ENCODE measurements at regions of chr3 and their contacts with region 1.

Region 1: DNA sequence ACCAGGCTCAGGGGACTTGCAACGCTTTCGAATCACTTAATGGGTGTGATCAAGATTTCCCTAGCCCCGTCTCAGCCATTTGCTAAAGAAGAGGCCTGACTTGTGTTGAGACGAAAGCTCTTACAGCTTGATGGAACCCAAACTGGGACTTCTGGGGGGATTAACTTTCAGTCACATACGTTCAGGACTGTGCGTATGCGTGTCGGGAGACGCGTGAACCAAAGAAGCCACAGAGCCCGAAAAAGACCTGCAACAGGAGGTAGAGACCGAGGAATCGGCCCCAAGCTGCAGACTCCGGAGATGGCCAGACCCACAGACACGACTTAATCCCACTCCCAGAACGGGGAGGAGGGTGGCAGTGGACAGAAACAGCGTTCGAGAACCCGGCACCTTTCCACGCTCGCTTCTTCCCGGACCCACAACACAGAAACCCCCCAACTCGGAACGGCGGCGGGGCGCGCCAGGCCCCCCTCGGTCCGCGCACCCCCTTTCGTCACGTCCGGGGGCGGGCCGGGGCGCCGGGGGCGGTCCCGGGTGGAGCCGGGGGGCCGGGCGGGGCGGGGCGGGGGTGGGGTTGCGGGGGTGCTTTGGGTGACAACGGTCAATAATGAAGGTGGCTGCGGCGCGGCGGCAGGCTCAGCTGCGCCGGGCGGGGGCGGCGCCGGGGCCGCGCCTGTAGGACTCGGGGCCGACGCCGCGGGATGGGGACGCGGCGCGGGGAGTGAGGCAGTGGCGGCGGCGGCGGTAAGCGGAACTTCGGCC is at the start of gene ATP11B:
- DNase-seq: peak; percentile 60 to 90 (median 75)
- ATAC-seq: peak; percentile 59
- H3K4me3 ChIP-seq: peak within 1 kb of the TSS; percentile 84
- H3K4me3 Mint-ChIP-seq: peak within 1 kb of the TSS; percentile 100
- H3K27ac ChIP-seq: peak within 1 kb of the TSS; percentile 95 to 98
- H3K27ac Mint-ChIP-seq: peak within 1 kb of the TSS; percentile 100
- H3K4me1 ChIP-seq: peaks cover 17% of the 10 kb centered on the region
- H3K4me1 Mint-ChIP-seq: peaks cover 43% of the 10 kb centered on the region
- H3K27me3 ChIP-seq: no peaks in the 10 kb centered on the region
- H3K27me3 Mint-ChIP-seq: no peaks in the 10 kb centered on the region
- CTCF ChIP-seq: no peak
- total RNA-seq, gene ATP11B: 139 to 143 TPM

Region 2: DNA sequence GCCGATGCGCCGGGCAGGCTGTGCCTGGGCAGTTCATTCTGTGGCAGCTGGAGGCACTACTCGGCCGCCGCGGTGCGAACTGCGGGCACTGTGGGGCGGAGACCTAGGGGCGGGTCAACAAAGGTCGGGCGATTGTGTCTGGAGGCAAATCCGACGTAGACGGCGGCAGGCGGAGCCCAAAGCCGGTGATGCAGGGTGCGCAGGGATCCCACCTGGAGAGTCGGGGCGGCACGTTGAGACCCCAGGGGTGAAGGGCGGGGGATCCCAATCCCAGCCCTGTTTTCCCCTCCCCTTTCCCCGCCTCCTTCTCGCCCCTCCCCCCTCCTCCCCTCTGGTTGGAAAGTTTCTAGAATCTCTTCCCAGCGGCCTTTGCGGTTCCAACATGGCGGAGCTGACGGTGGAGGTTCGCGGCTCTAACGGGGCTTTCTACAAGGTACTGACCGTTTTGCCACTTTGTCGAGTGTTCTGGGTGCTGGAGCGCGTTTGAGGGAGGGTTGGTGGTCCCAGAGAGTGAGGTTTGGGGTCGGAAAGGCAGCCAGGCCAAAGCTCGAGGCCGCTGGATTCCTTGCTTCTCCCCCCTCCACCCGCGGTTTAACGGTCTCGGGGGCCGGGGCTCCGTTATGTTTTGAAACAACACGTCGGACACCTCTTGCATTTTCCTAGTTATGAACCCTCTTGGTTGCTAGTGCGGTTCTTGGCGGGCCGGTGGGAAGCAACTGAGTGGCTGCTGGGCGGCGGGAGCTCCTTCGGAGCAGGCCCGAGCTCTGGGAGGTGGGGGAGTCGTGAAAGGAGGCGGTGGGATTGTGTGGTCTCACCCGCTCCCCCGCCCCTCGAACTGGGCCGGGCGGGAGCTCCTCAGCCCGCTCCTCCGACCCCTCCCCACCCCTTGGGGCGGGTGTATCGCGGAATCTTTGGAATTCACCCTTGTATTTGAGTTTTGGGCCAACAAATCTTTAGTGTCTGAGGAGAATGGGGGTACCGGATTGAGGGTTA is 1880.5 kb before region 1 on chr3 and contains the start of gene FXR1:
- CTCF ChIA-PET with region 1: no interaction called
- POLR2A ChIA-PET with region 1: no interaction called
- intact Hi-C with region 1: loop called in 1 of 2 experiments (anchors 10 kb)
- DNase-seq: peak; percentile 79 to 94 (median 85)
- ATAC-seq: peak; percentile 90
- H3K4me3 ChIP-seq: peak within 1 kb of the TSS; percentile 98
- H3K4me3 Mint-ChIP-seq: peak within 1 kb of the TSS; percentile 97
- H3K27ac ChIP-seq: peak within 1 kb of the TSS; percentile 89 to 94
- H3K27ac Mint-ChIP-seq: peak within 1 kb of the TSS; percentile 94
- H3K4me1 ChIP-seq: peaks cover 29% of the 10 kb centered on the region
- H3K4me1 Mint-ChIP-seq: peaks cover 65% of the 10 kb centered on the region
- H3K27me3 ChIP-seq: no peaks in the 10 kb centered on the region
- H3K27me3 Mint-ChIP-seq: no peaks in the 10 kb centered on the region
- CTCF ChIP-seq: peak; percentile 68
- total RNA-seq, gene FXR1: 172 to 174 TPM

Region 3: GRCh38 chr3:182808041-182808770 is 15.1 kb after region 1 on chr3:
- CTCF ChIA-PET with region 1: interaction called, 3 read pairs
- POLR2A ChIA-PET with region 1: interaction called, 8 read pairs
- intact Hi-C with region 1: loop called in 1 of 2 experiments (anchors 2 kb)
- DNase-seq: no peak
- ATAC-seq: no peak
- H3K4me3 ChIP-seq: no peak overlapping the region
- H3K4me3 Mint-ChIP-seq: peak overlapping the region; percentile 1
- H3K27ac ChIP-seq: no peak overlapping the region
- H3K27ac Mint-ChIP-seq: peak overlapping the region; percentile 24
- H3K4me1 ChIP-seq: no peaks in the 10 kb centered on the region
- H3K4me1 Mint-ChIP-seq: peaks cover 88% of the 10 kb centered on the region
- H3K27me3 ChIP-seq: no peaks in the 10 kb centered on the region
- H3K27me3 Mint-ChIP-seq: no peaks in the 10 kb centered on the region
- CTCF ChIP-seq: no peak

Region 4: DNA sequence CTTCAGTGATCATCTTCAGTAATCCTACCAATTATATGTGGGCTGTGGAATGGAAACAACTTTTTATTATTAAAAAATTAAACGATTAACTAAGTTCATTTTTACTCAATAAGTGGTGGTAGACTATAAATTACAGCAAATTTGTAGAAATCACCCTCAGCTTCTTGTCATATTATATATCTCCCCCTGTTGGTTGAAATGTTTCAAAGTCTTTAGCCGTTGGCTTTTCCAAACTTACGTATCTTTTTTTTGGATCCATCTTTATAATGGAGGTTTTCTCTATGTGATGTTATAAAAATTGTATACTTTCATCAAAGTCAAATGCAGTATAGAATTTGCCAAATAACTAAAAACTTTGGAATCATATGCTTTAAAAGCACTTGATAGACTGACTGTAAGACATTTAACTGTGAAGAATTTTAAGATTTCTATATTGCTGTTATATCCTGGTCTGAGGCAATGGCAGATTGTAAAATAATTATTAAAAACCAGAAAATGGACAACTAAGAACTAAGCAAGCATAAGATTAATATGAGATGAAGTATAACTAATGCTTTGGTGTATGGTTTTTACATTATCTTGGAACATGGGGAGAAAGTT is 44.9 kb after region 1 on chr3:
- CTCF ChIA-PET with region 1: interaction called, 3 read pairs
- POLR2A ChIA-PET with region 1: interaction called, 7 read pairs
- intact Hi-C with region 1: loop called (anchors 5 kb)
- DNase-seq: peak in 3 of 14 experiments; percentile 42 to 50 (median 46)
- ATAC-seq: no peak
- H3K4me3 ChIP-seq: no peak overlapping the region
- H3K4me3 Mint-ChIP-seq: no peak overlapping the region
- H3K27ac ChIP-seq: no peak overlapping the region
- H3K27ac Mint-ChIP-seq: no peak overlapping the region
- H3K4me1 ChIP-seq: no peaks in the 10 kb centered on the region
- H3K4me1 Mint-ChIP-seq: peaks cover 22% of the 10 kb centered on the region
- H3K27me3 ChIP-seq: no peaks in the 10 kb centered on the region
- H3K27me3 Mint-ChIP-seq: no peaks in the 10 kb centered on the region
- CTCF ChIP-seq: peak; percentile 66

Region 5: DNA sequence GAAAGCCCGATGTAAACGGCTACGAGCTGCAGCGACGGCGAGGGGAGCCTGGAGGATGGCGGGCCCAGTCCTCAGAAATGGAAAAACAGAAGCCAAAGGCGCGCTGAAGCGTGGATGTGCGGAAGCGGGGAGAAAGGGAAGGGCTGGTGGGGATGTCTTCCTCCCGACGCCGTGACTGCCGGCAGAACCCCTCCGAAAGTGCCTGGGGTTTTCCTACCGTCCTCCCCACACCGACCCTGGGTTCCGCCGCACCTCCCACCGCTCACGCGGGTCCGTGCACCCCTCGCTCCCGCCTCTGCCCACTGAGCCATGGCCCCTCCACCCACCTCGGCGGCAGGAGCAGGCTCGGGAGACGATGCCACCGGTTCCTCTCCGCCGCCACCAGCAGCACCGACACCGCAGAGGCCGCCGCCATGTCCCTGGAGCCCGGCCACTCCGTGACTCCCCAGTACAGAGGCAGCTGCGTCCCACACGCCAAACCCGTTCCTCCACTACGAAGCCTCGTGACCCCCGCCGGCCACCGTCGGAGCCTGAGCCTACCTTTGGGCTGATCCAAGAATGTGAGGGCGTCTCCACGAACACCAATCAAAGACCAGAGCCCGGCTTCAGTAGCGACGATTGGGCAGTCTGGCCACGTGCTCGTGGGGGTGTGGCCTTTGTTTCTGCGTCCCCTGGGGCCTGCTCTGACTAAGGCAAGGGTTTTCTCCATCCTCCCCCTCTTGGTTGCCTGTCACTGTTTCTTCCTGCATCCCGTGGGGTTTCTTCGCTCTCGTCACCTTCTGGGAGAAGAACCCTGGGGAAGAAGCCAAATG is 306.1 kb after region 1 on chr3 and contains the start of gene MCCC1:
- CTCF ChIA-PET with region 1: no interaction called
- POLR2A ChIA-PET with region 1: interaction called, 8 read pairs
- intact Hi-C with region 1: loop called in 1 of 2 experiments (anchors 5 kb)
- DNase-seq: peak; percentile 92 to 99 (median 96)
- ATAC-seq: peak; percentile 97
- H3K4me3 ChIP-seq: peak within 1 kb of the TSS; percentile 87
- H3K4me3 Mint-ChIP-seq: peak within 1 kb of the TSS; percentile 99
- H3K27ac ChIP-seq: peak within 1 kb of the TSS; percentile 80 to 81
- H3K27ac Mint-ChIP-seq: peak within 1 kb of the TSS; percentile 96
- H3K4me1 ChIP-seq: peaks cover 18% of the 10 kb centered on the region
- H3K4me1 Mint-ChIP-seq: peaks cover 46% of the 10 kb centered on the region
- H3K27me3 ChIP-seq: no peaks in the 10 kb centered on the region
- H3K27me3 Mint-ChIP-seq: no peaks in the 10 kb centered on the region
- CTCF ChIP-seq: no peak
- total RNA-seq, gene MCCC1: 16.4 to 16.7 TPM